ENCODE measurements at regions of chr18 and their contacts with region 1.

Region 1: GRCh38 chr18:12271376-12272235 is 17.4 kb downstream of the CIDEA start:
- DNase-seq: peak; percentile 60 to 83
- H3K4me3 ChIP-seq: peak overlapping the region; percentile 70
- H3K27ac ChIP-seq: peak overlapping the region; percentile 57
- H3K4me1 ChIP-seq: no peaks in the 10 kb centered on the region
- H3K27me3 ChIP-seq: no peaks in the 10 kb centered on the region
- CTCF ChIP-seq: peak; percentile 80

Region 2: GRCh38 chr18:12059334-12060181 is 212.0 kb before region 1 on chr18:
- CTCF ChIA-PET with region 1: interaction called, 13 read pairs
- POLR2A ChIA-PET with region 1: no interaction called
- intact Hi-C with region 1: no loop called
- DNase-seq: no peak
- H3K4me3 ChIP-seq: no peak overlapping the region
- H3K27ac ChIP-seq: no peak overlapping the region
- H3K4me1 ChIP-seq: no peaks in the 10 kb centered on the region
- H3K27me3 ChIP-seq: no peaks in the 10 kb centered on the region
- CTCF ChIP-seq: no peak

Region 3: DNA sequence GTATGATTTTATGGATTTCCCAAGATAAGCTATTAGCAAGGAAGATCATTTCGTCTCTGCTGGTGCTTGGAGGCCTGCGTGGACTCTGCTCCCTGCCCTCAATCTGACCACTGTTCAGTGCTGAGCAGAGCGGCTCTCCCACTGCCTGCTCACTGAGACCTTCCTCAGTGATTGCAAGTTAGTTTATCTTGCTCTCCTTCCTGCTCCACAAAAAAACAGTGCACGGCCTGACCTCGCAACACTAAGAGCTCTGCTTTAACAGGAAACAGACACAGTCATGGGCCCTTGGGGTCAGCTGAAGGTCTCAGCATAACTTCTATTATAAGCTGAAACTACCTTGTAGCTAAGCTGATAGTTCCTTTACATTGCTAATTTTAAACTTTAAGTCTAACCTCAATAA is 189.3 kb after region 1 on chr18:
- CTCF ChIA-PET with region 1: interaction called, 12 read pairs
- POLR2A ChIA-PET with region 1: no interaction called
- intact Hi-C with region 1: no loop called
- DNase-seq: no peak
- H3K4me3 ChIP-seq: no peak overlapping the region
- H3K27ac ChIP-seq: no peak overlapping the region
- H3K4me1 ChIP-seq: no peaks in the 10 kb centered on the region
- H3K27me3 ChIP-seq: no peaks in the 10 kb centered on the region
- CTCF ChIP-seq: no peak

Region 4: DNA sequence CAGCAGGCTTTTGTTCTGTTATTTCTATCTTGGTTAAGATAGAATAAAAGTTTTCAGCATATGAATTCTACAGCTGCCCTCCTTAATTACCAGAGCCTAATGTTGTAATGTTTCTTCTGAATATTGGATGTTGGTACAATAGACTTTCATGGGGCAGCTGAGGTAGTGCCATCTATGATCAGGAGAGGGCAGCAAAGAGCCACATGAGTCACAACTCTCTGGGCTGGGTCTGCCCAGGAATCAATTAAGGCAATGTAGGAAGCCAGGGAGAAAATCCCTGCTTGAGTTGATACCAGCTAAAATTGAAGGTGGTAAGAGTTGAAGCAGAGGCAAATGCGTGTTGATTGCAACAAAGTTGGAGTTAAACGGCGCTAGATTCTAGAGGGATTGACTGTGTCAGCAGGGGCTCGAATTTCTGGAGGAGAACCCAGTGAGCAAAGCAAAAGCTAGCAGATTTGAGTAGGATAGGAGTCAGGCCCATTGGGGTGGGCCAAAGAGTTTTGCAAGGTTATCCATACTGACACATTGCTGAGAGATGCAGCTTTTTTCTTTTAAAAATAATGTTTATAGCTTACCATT is 1541.8 kb after region 1 on chr18:
- CTCF ChIA-PET with region 1: interaction called, 10 read pairs
- POLR2A ChIA-PET with region 1: no interaction called
- intact Hi-C with region 1: no loop called
- DNase-seq: peak; percentile 47 to 67
- H3K4me3 ChIP-seq: no peak overlapping the region
- H3K27ac ChIP-seq: no peak overlapping the region
- H3K4me1 ChIP-seq: peaks cover 19% of the 10 kb centered on the region
- H3K27me3 ChIP-seq: peaks cover 8% of the 10 kb centered on the region; the same call in 1 of the 2 replicates
- CTCF ChIP-seq: peak; percentile 88

Measured in PC-9 (cell line).